ENCODE measurements at regions of chr14 and their contacts with region 1.

Region 1: GRCh38 chr14:55051426-55052268 is at the start of gene MAPK1IP1L:
- DNase-seq: peak; percentile 97
- H3K27ac ChIP-seq: peak within 1 kb of the TSS; percentile 98
- CTCF ChIP-seq: peak; percentile 99

Region 2: DNA sequence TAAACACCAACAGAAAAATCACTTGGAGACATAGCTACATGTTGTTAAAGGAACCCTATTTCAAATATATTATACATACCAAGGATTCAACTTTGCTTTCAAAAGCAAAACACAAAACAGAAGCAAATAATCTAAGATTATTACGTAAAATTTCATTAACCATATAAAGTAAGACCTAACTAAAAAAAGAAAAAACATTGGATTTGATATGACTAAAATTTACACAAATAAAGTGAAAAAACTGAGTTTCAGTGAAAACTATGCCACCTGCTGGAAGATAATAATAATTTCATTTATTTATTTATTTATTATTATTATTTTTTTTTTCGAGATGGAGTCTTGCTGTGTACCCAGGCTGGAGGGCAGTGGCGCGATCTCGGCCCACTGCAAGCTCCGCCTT is 69.9 kb before region 1 on chr14:
- CTCF ChIA-PET with region 1: no interaction called
- POLR2A ChIA-PET with region 1: no interaction called
- DNase-seq: no peak
- H3K27ac ChIP-seq: no peak overlapping the region
- CTCF ChIP-seq: no peak; the same call in 1 of the 2 replicates

Region 3: GRCh38 chr14:55038708-55039107 is 12.9 kb before region 1 on chr14:
- CTCF ChIA-PET with region 1: interaction called, 13 read pairs
- POLR2A ChIA-PET with region 1: no interaction called
- DNase-seq: peak; percentile 26
- H3K27ac ChIP-seq: no peak overlapping the region
- CTCF ChIP-seq: no peak

Region 4: DNA sequence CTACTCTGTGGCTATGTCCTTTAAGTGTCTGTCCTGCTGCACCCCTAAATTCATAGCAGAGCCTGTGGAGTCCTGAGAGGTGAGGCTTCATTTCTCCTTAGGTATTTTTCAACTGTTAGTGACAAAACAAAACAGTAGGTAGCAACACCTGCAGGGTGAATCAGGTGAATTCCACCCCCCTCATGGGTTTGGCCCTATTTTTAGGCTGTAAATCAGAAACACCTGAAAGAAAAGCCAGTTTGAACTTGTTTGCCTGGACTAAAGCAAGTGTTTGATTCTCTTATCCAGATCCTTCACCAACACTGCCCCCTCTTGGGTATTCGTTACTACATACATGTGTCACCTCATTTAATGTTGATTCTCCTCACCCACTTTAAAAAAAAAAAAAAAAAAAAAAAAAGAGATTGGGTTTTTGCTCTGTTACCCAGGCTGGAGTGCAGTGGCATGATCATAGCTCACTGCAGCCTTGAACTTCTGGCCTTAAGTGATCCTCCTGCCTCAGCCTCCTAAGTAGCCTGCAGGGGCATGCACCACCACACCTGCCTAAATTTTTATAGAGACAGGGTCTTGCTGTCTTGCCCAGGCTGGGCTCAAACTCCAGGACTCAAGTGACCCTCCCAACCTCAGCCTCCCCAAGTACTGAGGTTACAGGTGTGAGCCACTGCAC is 378.5 kb after region 1 on chr14:
- CTCF ChIA-PET with region 1: no interaction called
- POLR2A ChIA-PET with region 1: no interaction called
- DNase-seq: peak; percentile 85
- H3K27ac ChIP-seq: no peak overlapping the region
- CTCF ChIP-seq: peak; percentile 30

Measured in RWPE1 (cell line).